ENCODE measurements at regions of chr6 and their contacts with region 1.

Region 1: DNA sequence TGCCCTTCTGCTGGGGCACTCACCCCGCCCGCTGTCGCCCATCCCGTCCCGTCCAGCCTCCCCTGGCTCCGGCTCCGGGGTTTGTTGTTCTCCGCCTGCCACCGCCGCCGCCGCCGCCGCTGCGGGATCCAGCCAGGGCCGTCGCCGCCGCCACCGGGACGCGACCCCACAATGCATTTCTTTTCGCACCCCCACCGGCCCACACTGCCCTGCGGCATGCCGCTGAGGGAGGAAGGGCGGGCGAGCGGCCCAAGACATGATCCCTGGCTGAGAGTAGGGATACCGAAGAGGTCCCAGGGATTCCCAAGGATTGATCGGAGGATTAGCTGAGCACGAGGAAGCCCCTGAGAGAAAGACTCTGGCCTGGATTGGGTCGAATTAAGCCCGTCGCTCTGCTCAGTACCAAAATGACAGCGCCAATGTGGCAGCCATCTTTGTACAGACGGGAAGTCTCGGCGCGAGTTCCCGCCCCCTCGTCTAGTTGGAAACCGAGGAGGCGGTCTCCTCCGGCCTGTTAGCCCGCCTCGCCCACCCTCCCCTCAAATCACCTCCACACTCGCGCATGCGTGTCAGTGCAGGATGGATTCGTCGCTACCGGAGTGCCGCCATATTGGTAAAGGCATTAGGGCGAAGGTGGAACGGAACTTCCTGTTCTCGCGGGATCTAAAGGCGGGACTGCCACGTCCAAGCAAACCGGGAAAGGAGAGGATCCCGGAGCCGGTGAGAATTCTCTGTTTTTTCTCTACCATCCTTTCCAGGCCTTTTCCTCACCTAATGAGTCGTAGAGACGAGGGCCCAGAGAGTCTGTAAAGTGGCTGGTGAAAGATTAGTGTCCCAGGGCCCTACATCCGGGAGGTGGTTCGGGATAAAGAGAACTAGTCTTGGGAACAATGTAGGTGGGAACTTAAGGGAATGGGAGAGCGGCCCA is at the starts of genes RXRB and SLC39A7:
- DNase-seq: peak; percentile 99
- H3K4me3 ChIP-seq: peak within 1 kb of the TSS; percentile 77 to 97 (median 78)
- H3K27ac ChIP-seq: peak within 1 kb of the TSS; percentile 88
- H3K4me1 ChIP-seq: peaks cover 23% of the 10 kb centered on the region
- H3K27me3 ChIP-seq: no peaks in the 10 kb centered on the region
- CTCF ChIP-seq: no peak
- total RNA-seq, gene RXRB: 15.0 to 30.7 TPM
- total RNA-seq, gene SLC39A7: 52.8 to 99.3 TPM

Region 2: GRCh38 chr6:32971581-32972352 is 228.7 kb before region 1 on chr6:
- CTCF ChIA-PET with region 1: no interaction called
- dilution Hi-C with region 1: no loop called
- in situ Hi-C with region 1: no loop called
- intact Hi-C with region 1: loop called (anchors 2 kb)
- DNase-seq: peak; percentile 100
- H3K4me3 ChIP-seq: peak overlapping the region; percentile 83 to 90 (median 89)
- H3K27ac ChIP-seq: peak overlapping the region; percentile 99
- H3K4me1 ChIP-seq: peaks cover 24% of the 10 kb centered on the region
- H3K27me3 ChIP-seq: no peaks in the 10 kb centered on the region
- CTCF ChIP-seq: no peak

Region 3: DNA sequence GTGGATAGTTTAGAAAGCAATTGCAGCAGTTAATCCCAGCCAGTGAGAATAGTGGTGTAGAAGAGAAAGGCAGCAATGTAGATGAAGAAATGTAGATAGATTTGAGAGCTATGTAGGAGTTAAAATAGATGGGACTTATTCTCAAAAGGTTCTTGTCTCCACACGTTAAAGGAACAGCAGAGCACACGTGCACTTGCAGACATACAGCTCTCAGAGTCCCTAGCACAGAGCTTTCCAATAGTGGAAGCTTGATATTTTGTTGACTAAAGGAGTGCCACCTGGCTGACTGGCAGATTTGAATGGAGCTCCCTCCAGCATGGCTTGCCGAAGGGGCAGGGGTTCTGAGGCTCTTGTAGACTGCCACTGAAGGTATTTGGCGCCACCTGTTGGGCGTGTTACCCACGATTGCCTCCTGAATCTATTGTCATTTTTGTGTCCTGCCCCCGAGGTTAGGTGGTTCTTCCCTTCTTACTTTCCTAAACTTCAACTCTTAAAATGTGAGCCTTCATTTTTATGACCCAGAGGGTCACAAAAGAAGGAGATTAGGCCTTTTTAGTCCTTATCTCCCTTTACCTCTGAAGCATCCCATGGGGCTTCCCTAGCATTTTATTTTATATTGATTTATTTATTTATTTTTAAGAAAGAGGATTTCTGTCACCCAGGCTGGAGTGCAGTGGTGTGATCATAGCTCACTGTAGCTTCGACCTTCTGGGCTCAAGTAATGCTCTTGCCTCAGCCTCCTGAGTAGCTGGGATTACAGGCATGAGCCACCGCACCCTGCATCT is 215.7 kb before region 1 on chr6:
- CTCF ChIA-PET with region 1: no interaction called
- dilution Hi-C with region 1: no loop called
- in situ Hi-C with region 1: no loop called
- intact Hi-C with region 1: no loop called
- DNase-seq: peak; percentile 60
- H3K4me3 ChIP-seq: no peak overlapping the region
- H3K27ac ChIP-seq: no peak overlapping the region
- H3K4me1 ChIP-seq: no peaks in the 10 kb centered on the region
- H3K27me3 ChIP-seq: no peaks in the 10 kb centered on the region
- CTCF ChIP-seq: peak; percentile 79 to 92

Region 4: DNA sequence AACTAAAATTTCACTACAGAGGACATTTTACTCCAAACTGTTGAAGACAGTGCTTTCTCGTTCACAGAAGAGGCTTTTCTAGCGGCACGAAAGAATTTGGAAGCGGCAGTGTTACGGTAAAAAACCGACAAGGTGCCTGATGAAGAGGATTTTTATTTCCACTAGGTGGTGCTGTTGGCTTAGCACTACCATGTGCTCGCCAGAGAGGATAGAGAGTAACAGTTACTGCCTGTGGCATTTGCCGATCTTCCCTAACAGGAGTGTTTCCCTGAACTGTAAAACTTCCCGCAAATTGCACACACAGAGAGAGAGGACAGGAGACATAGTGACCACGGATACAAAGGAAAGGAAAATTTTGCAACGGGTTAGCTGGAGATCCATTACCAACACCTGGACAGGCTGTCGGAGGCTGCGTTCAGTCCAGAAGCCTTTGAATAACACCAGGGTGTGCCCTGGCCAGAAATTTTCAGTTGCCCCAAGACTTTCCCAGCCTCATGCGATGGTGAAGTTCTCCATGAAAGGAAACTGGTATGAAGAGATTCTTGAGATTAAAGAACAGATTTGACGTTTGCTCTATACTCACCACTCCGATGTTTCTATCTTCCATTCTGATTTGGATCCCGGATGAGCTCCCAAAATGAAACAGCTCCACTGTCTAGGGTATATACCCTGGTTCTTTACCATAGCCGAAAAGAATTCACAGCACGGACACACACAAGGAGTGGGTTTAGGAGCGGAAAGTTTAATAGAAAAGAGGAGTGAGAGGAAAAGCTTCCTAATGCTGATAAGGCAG is 76.6 kb before region 1 on chr6:
- CTCF ChIA-PET with region 1: interaction called, 3 read pairs
- dilution Hi-C with region 1: no loop called
- in situ Hi-C with region 1: no loop called
- intact Hi-C with region 1: loop called (anchors 1 kb)
- DNase-seq: no peak
- H3K4me3 ChIP-seq: no peak overlapping the region
- H3K27ac ChIP-seq: no peak overlapping the region
- H3K4me1 ChIP-seq: no peaks in the 10 kb centered on the region
- H3K27me3 ChIP-seq: no peaks in the 10 kb centered on the region
- CTCF ChIP-seq: peak; percentile 49 to 53

Region 5: DNA sequence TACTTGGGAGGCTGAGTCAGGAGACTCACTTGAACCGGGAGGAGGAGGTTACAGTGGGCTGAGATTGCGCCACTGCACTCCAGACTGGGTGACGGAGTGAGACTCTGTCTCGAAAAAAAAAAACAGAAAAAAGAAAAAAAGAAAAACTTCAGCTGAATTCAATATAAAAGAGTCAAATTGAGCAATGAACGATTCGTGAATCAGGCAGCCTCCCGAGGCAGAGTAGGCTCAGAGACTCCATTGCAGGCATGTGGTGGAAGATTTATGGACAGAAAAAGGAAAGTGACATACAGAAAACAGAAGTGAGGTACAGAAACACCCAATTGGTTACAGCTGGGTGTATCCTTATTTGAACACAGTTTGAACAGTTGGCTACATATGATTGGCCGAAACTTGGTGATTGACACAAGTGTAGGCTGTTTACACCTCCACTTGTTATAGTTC is 68.4 kb before region 1 on chr6:
- CTCF ChIA-PET with region 1: interaction called, 3 read pairs
- dilution Hi-C with region 1: loop called (anchors 5 kb)
- in situ Hi-C with region 1: no loop called
- intact Hi-C with region 1: no loop called
- DNase-seq: no peak
- H3K4me3 ChIP-seq: no peak overlapping the region
- H3K27ac ChIP-seq: no peak overlapping the region
- H3K4me1 ChIP-seq: no peaks in the 10 kb centered on the region
- H3K27me3 ChIP-seq: no peaks in the 10 kb centered on the region
- CTCF ChIP-seq: no peak

Region 6: GRCh38 chr6:33161354-33162331 is 38.8 kb before region 1 on chr6:
- CTCF ChIA-PET with region 1: no interaction called
- dilution Hi-C with region 1: no loop called
- in situ Hi-C with region 1: no loop called
- intact Hi-C with region 1: loop called (anchors 1 kb)
- DNase-seq: peak; percentile 42
- H3K4me3 ChIP-seq: peak overlapping the region; percentile 22 to 64 (median 44)
- H3K27ac ChIP-seq: no peak overlapping the region
- H3K4me1 ChIP-seq: peaks cover 6% of the 10 kb centered on the region
- H3K27me3 ChIP-seq: no peaks in the 10 kb centered on the region
- CTCF ChIP-seq: peak; percentile 75 to 97

Region 7: DNA sequence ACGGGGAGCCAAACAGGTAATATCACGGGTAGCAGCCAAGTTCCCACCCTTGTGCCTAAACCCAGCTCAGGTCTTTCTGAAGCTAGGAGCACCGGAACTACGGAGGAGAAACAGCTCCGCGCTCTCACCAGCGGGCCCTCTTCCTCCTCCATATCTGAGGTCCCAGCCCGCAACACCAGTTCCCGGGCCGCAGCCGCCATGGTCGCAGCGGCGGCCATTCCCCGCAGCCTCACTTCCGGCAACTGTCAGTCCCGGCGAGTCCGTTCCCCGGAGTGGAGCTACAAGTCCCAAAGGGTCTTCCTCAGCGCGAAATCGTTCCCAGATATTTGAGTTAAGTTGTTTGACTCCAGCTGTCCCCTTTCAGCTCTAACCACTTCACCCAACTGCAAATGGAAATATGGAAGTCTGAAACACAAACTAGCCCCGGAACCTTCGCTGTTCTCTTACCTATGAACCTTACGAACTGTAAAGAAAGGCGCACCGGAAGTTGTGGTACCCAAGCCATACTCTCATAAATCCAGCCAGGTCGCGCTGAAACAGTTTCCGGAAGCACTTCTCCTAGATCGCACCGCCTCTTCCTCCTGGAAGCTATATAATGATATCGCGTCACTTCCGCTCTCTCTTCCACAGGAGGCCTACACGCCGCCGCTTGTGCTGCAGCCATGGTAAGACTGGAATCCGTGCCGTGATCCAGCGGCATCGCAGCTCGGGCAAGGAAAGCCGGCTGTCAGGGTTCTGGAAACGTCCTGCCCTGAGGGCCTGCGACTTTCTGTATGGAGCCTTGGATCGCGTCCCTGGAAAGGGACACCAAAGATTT is 71.2 kb after region 1 on chr6 and contains the starts of genes RPS18 and VPS52:
- CTCF ChIA-PET with region 1: no interaction called
- dilution Hi-C with region 1: no loop called
- in situ Hi-C with region 1: no loop called
- intact Hi-C with region 1: no loop called
- DNase-seq: peak; percentile 96
- H3K4me3 ChIP-seq: peak within 1 kb of the TSS; percentile 73 to 82 (median 75)
- H3K27ac ChIP-seq: peak within 1 kb of the TSS; percentile 91
- H3K4me1 ChIP-seq: peaks cover 39% of the 10 kb centered on the region
- H3K27me3 ChIP-seq: no peaks in the 10 kb centered on the region
- CTCF ChIP-seq: peak in 1 of 2 donors; percentile 5
- total RNA-seq, gene RPS18: 2,176 to 2,484 TPM
- total RNA-seq, gene VPS52: 34.0 to 40.2 TPM

Measured in mammary epithelial cell (primary cell).